ENCODE measurements at regions of chr9 and their contacts with region 1.

Region 1: DNA sequence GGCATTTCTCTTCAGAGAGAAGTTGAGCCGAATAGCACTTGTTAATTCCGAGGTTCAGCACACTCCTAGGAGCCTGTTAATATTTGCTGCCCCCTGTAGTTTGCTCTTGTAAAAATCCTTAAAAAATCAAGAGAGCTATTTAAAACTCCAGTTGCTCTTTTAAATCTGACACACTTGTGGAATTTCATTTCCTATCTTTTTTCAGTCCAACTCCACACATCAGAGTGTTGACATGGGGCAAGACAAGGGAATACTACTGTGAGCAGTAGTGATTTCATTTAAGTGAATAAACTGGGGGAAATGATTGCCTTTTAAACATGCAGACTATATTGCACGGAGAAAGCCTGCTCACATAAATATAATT is 1096.3 kb upstream of the DMAC1 start:
- DNase-seq: peak; percentile 30
- ATAC-seq: peak; percentile 71
- H3K4me3 ChIP-seq: no peak overlapping the region
- H3K27ac ChIP-seq: no peak overlapping the region
- H3K4me1 ChIP-seq: no peaks in the 10 kb centered on the region
- H3K27me3 ChIP-seq: no peaks in the 10 kb centered on the region
- CTCF ChIP-seq: peak; percentile 47
- EP300 ChIP-seq: no peak
- POLR2A ChIP-seq: no peak
- RAD21 ChIP-seq: no peak

Region 2: GRCh38 chr9:7570107-7570720 is 1325.6 kb before region 1 on chr9:
- CTCF ChIA-PET with region 1: no interaction called
- POLR2A ChIA-PET with region 1: no interaction called
- in situ Hi-C with region 1: no loop called
- intact Hi-C with region 1: loop called (anchors 5 kb)
- DNase-seq: peak; percentile 58
- ATAC-seq: peak; percentile 81
- H3K4me3 ChIP-seq: no peak overlapping the region
- H3K27ac ChIP-seq: no peak overlapping the region
- H3K4me1 ChIP-seq: no peaks in the 10 kb centered on the region
- H3K27me3 ChIP-seq: no peaks in the 10 kb centered on the region
- CTCF ChIP-seq: peak; percentile 84
- EP300 ChIP-seq: no peak
- POLR2A ChIP-seq: no peak
- RAD21 ChIP-seq: no peak

Region 3: GRCh38 chr9:7844242-7844641 is 1051.6 kb before region 1 on chr9:
- CTCF ChIA-PET with region 1: no interaction called
- POLR2A ChIA-PET with region 1: no interaction called
- in situ Hi-C with region 1: no loop called
- intact Hi-C with region 1: loop called (anchors 1 kb)
- DNase-seq: peak; percentile 4
- ATAC-seq: peak; percentile 94
- H3K4me3 ChIP-seq: no peak overlapping the region
- H3K27ac ChIP-seq: no peak overlapping the region
- H3K4me1 ChIP-seq: no peaks in the 10 kb centered on the region
- H3K27me3 ChIP-seq: no peaks in the 10 kb centered on the region
- CTCF ChIP-seq: peak; percentile 56
- EP300 ChIP-seq: no peak
- POLR2A ChIP-seq: no peak
- RAD21 ChIP-seq: no peak

Region 4: DNA sequence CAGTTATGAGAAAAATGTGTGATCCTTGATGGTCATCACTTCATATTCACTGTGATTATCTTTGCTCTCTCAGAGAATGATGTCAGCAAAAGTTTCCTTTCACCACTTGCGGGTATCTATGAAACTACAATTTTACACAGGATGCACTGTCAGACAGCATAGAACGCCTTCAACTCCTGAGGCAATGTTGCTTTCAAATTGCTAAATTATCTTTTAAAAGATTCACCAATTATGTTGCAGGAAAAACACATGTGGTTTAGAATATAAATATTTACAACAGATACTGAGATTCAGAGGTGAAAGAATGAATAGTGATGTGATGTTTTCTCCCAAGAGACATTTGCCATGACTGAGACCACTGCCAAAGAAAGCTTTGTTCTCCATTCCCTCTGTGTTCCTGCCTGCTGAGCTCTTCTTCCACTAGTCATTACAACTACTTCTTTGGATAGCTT is 216.4 kb before region 1 on chr9:
- CTCF ChIA-PET with region 1: no interaction called
- POLR2A ChIA-PET with region 1: no interaction called
- in situ Hi-C with region 1: no loop called
- intact Hi-C with region 1: loop called (anchors 10 kb)
- DNase-seq: no peak
- ATAC-seq: no peak
- H3K4me3 ChIP-seq: no peak overlapping the region
- H3K27ac ChIP-seq: no peak overlapping the region
- H3K4me1 ChIP-seq: no peaks in the 10 kb centered on the region
- H3K27me3 ChIP-seq: no peaks in the 10 kb centered on the region
- CTCF ChIP-seq: no peak
- EP300 ChIP-seq: no peak
- POLR2A ChIP-seq: no peak
- RAD21 ChIP-seq: no peak

Region 5: DNA sequence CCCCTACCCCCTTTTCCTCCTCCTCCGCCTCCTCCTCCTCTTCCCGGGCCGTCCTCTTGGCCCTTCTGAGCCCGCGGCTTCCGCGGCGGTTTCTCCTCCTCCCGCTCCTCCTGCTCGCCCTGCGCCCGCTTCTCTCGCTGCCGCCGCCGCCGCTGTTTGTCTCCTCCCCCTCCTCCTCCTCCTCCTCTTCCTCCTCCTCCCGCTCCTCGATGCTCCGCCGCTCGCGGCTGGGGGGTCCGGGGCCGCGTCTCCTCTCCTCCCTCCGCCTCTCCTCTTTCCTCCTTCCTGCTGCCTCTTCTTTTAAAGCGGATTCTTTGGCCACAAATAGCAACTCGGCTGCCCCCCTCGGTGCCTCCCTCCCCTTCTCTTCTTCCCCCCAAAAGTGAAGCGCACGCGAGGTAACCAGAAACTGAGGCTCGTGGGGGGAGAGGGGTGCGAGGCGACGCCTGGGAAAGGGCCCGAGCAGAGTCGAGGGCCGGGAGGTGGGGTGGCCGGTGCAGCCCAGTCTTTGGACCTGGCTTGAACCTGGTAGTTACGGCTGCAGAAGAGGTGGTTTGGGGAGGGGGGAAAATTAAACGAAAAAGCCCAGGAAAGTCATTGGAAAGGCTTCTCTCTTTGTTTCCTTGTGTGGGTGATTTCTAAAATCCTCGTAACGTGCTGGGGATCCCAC is 37.8 kb before region 1 on chr9:
- CTCF ChIA-PET with region 1: no interaction called
- POLR2A ChIA-PET with region 1: no interaction called
- in situ Hi-C with region 1: no loop called
- intact Hi-C with region 1: no loop called
- DNase-seq: no peak
- ATAC-seq: peak; percentile 67
- H3K4me3 ChIP-seq: peak overlapping the region in 2 of 3 experiments; percentile 29 to 50; a peak in 3 of 6 replicates
- H3K27ac ChIP-seq: no peak overlapping the region
- H3K4me1 ChIP-seq: peaks cover 5% of the 10 kb centered on the region; the same call in 1 of the 2 replicates
- H3K27me3 ChIP-seq: peaks cover 1 to 22% of the 10 kb centered on the region in 2 experiments; a peak in 4 of 5 replicates
- CTCF ChIP-seq: no peak
- EP300 ChIP-seq: no peak
- POLR2A ChIP-seq: no peak
- RAD21 ChIP-seq: no peak